CD14-positive monocyte (primary cell): ENCODE measurements at regions of chr15 and their contacts with region 1.

Region 1: DNA sequence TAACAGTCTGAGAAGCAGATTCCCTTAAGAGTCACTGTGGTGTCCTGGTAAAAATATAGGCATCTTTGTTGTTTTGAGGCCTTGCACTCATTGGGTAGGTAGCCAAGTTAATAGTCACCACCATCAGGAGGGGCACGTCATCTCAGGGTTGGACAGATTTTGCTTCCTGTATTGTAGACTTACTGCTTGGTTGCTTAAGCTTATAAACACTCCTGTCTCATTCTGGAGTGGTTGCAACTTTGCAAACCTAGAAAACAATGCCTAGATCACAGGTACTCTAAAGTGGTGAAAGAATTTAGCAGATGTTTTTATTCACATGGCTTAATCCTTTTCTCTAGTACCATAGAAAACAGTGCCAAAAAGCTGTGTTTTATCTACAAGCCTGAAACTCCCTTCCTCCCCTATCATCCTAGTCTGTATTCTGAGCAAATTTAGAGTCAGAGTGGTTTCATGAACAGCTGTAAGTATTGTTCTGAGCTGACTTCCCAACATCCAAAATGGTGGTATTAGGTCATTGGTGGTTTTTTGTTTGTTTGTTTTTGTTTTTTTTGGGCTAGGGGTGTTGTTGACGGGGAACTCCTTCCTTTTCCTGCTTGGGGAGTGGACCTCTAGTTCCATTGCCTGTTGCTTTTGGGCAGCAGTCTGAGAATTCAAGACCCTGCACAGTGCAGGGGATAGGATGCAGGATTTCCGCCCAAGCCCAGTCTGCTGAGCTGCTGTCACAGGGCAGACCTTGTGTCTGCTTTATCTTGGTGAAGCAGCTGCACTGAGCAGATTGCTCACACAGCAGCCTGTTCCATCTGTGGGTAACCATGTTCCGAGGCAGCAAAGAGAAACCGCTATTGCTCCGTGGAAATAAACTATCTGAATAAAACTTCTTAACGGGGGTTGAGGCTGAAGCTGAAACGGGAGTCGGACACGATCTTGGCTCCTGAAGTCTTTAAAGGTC is 202.0 kb downstream of the AKAP13 start:
- DNase-seq: peak; percentile 84 to 94 (median 92)
- H3K4me3 ChIP-seq: peak overlapping the region; percentile 23 to 82 (median 63)
- H3K4me3 Mint-ChIP-seq: peak overlapping the region; percentile 74 to 85
- H3K27ac ChIP-seq: peak overlapping the region; percentile 92 to 99
- H3K27ac Mint-ChIP-seq: peak overlapping the region; percentile 99 to 100 (median 100)
- H3K4me1 ChIP-seq: peaks cover 76 to 80% of the 10 kb centered on the region in 2 donors
- H3K4me1 Mint-ChIP-seq: peaks cover 79% of the 10 kb centered on the region
- H3K27me3 ChIP-seq: no peaks in the 10 kb centered on the region
- H3K27me3 Mint-ChIP-seq: peaks cover 0 to 8% (median 0%) of the 10 kb centered on the region in 3 donors
- CTCF ChIP-seq: no peak

Region 2: DNA sequence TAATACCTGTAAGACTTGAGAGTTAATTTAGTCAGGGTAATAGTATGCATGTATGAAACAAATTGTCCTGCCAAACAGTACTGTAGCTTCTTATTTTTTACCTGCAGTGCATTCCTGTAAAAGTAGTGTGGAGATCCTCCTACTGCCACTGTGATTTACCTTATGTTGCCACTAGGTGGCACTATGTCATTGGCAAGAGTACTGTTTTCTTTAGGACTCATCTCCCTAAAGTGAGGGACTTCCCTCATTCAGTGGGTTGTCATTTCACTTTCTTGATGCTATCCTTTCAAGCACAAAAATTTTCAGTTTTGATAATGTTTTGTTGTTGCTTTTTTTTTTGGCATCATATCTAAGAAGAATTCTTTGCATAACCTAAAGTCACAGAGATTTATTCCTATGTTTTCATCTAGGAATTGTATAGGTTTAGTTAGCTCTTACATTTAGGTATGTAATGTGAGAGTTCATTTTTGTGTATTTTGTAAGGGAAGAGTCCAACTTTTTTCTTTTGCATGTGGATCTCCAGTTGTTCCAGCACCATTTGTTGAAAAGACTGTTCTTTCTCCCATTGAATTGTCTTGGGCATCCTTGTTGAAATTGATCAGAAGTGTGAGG is 96.3 kb before region 1 on chr15:
- intact Hi-C with region 1: loop called (anchors 5 to 10 kb)
- DNase-seq: peak; percentile 59 to 86 (median 78)
- H3K4me3 ChIP-seq: no peak overlapping the region
- H3K4me3 Mint-ChIP-seq: no peak overlapping the region
- H3K27ac ChIP-seq: no peak overlapping the region
- H3K27ac Mint-ChIP-seq: peak overlapping the region in 1 of 7 donors; percentile 75
- H3K4me1 ChIP-seq: peaks cover 21 to 29% of the 10 kb centered on the region in 2 donors
- H3K4me1 Mint-ChIP-seq: peaks cover 53% of the 10 kb centered on the region
- H3K27me3 ChIP-seq: no peaks in the 10 kb centered on the region
- H3K27me3 Mint-ChIP-seq: peaks cover 0 to 3% (median 0%) of the 10 kb centered on the region in 3 donors
- CTCF ChIP-seq: peak; percentile 91

Region 3: DNA sequence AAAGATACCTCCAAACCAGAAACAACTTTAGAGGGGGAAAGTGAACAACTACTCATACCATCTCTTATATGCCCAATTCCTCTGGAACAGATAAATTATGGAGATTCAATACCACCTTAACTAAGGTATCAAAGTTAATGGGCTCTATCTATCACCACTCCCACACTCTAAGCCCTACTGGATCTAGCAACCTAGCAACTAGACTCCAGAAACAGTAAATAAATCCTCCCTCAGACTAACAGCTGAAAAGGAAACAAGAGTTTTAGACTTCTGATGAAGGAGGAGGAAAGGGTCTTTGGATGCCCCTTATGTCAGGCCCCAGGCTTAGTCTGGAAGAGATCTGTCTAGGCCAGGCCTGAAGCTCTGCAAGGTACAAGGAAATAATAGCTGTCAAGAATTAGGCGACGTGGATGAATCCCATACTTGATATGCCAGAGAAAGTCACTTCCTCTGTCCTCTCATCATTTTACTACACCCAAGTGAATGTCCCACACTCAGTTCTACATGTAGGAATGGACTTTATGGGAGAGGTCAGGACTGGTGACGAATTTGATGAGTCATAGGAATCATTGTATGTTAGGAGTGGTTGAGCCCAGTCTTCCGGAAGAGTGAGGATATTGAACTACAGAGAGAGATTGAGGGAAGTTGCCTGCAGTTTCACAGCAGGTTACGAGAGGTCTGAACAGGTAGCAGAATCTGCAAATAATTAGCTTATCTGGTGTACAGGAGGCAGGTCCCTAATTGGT is 88.2 kb before region 1 on chr15:
- intact Hi-C with region 1: loop called (anchors 5 to 10 kb)
- DNase-seq: peak; percentile 12 to 54 (median 50)
- H3K4me3 ChIP-seq: no peak overlapping the region
- H3K4me3 Mint-ChIP-seq: no peak overlapping the region
- H3K27ac ChIP-seq: no peak overlapping the region
- H3K27ac Mint-ChIP-seq: peak overlapping the region in 3 of 7 donors; percentile 17 to 66 (median 21)
- H3K4me1 ChIP-seq: peaks cover 32% of the 10 kb centered on the region in 2 donors
- H3K4me1 Mint-ChIP-seq: peaks cover 49% of the 10 kb centered on the region
- H3K27me3 ChIP-seq: no peaks in the 10 kb centered on the region
- H3K27me3 Mint-ChIP-seq: peaks cover 0 to 6% (median 1%) of the 10 kb centered on the region in 3 donors
- CTCF ChIP-seq: no peak

Region 4: DNA sequence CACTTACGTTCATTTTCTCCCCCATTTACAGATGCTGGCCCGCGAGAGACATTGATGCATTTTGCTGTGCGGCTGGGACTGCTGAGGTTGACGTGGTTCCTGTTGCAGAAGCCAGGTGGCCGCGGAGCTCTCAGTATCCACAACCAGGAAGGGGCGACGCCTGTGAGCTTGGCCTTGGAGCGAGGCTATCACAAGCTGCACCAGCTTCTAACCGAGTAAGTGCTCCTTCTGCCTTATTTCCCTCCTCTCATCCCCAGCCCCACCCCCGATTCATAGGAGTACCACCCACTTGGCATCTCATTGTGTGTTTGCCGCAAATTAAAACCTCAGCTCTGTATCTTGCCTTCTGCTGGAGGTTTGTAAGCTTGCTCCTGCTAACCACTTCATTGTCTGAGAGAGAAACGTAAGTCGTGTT is 38.7 kb before region 1 on chr15:
- intact Hi-C with region 1: loop called (anchors 2 to 5 kb)
- DNase-seq: peak; percentile 51 to 73 (median 63)
- H3K4me3 ChIP-seq: peak overlapping the region; percentile 80 to 85 (median 80)
- H3K4me3 Mint-ChIP-seq: peak overlapping the region; percentile 86 to 96
- H3K27ac ChIP-seq: peak overlapping the region; percentile 55 to 98
- H3K27ac Mint-ChIP-seq: peak overlapping the region; percentile 98 to 100 (median 99)
- H3K4me1 ChIP-seq: peaks cover 74 to 97% of the 10 kb centered on the region in 2 donors
- H3K4me1 Mint-ChIP-seq: peaks cover 87% of the 10 kb centered on the region
- H3K27me3 ChIP-seq: no peaks in the 10 kb centered on the region
- H3K27me3 Mint-ChIP-seq: peaks cover 0 to 2% (median 0%) of the 10 kb centered on the region in 3 donors
- CTCF ChIP-seq: peak; percentile 19

Region 5: GRCh38 chr15:85625856-85626255 is 43.5 kb after region 1 on chr15:
- intact Hi-C with region 1: loop called in 1 of 2 experiments (anchors 5 kb)
- DNase-seq: peak in 1 of 3 donors; percentile 23
- H3K4me3 ChIP-seq: no peak overlapping the region
- H3K4me3 Mint-ChIP-seq: no peak overlapping the region
- H3K27ac ChIP-seq: peak overlapping the region in 1 of 2 donors; percentile 76
- H3K27ac Mint-ChIP-seq: peak overlapping the region; percentile 11 to 93 (median 64)
- H3K4me1 ChIP-seq: peaks cover 74 to 80% of the 10 kb centered on the region in 2 donors
- H3K4me1 Mint-ChIP-seq: peaks cover 88% of the 10 kb centered on the region
- H3K27me3 ChIP-seq: no peaks in the 10 kb centered on the region
- H3K27me3 Mint-ChIP-seq: no peaks in the 10 kb centered on the region
- CTCF ChIP-seq: no peak